Activated CD4-positive, alpha-beta T cell treated with anti-CD3 and anti-CD28 coated beads, Interleukin-2, amount 10 ng/mL, durations not matched to agents 7 days and 5 days (primary cell): ENCODE measurements at regions of chr11 and their contacts with region 1.

Region 1: DNA sequence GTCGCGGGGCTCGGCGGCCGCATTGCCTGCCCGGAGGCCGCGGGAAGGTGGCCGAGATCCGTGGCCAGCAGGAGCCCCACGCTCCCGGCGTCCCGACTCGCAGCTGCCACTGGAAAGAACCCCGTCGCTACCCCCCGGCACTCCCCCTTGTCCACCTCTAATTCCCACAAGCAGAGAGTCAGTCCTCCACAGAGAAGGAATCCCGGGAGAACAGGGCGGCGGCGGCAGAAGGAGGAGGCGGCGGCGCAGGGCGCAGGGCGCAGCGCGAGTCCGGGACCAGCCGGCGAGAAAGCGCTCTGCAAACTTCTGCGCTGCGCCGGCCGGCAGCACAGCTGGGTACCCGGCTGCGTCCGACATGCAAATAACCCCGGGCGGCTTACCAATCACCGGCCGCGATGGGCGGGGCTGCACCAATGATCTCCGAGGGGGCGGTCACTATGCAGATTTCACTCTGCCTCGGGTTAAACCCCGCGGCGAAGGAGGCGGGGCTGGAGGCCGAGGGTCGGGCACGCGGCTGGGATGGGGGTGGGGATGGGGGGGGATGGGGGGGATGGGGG is at the start of gene ABTB2:
- DNase-seq: peak; percentile 98
- H3K4me3 Mint-ChIP-seq: peak within 1 kb of the TSS; percentile 80
- H3K27ac Mint-ChIP-seq: peak within 1 kb of the TSS; percentile 82
- H3K4me1 Mint-ChIP-seq: peaks cover 18% of the 10 kb centered on the region
- H3K27me3 Mint-ChIP-seq: peaks cover 49% of the 10 kb centered on the region
- total RNA-seq, gene ABTB2: 0.55 to 0.65 TPM

Region 2: DNA sequence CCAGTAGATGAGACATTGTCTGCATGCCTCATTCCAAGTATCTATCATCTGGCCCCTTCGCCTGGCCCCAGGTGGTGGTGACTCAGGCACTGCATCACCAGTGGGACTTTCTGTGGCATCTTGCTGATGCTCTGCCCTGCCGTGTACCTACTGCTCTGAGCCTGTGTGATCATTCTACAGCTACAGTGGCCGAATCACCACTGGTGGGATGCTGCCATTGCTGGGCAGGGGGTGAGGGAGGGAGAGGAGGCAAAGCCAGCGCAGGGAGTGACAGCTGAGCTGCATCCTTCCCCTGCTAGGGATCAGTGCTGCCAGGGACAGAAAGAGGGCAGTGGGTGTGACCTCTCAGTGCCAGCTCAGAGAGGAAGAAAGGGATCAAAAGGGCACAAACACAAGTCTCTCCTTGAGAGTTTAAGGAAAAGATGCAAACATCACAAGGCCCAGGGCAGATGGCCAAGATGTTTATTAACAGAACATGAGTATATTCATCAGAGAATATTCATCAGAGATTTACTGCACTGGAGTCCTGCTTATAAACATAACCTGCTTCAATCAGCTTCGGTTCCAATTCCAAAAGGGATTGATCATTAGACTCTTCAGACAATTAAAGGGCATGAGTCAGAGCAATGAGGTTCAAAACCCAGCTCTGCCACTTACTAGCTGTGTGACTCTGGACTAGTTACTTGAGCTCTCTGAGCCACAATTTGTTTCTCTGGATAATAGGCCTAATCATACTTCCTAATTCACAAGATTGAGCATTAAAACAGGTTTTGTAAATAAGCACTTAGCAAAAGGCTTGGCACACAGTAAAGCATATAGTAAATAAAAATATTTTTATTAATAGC is 142.6 kb before region 1 on chr11:
- CTCF ChIA-PET with region 1: no interaction called
- POLR2A ChIA-PET with region 1: no interaction called
- DNase-seq: no peak
- H3K4me3 Mint-ChIP-seq: no peak overlapping the region
- H3K27ac Mint-ChIP-seq: no peak overlapping the region
- H3K4me1 Mint-ChIP-seq: peaks cover 7% of the 10 kb centered on the region
- H3K27me3 Mint-ChIP-seq: peaks cover 8% of the 10 kb centered on the region

Region 3: DNA sequence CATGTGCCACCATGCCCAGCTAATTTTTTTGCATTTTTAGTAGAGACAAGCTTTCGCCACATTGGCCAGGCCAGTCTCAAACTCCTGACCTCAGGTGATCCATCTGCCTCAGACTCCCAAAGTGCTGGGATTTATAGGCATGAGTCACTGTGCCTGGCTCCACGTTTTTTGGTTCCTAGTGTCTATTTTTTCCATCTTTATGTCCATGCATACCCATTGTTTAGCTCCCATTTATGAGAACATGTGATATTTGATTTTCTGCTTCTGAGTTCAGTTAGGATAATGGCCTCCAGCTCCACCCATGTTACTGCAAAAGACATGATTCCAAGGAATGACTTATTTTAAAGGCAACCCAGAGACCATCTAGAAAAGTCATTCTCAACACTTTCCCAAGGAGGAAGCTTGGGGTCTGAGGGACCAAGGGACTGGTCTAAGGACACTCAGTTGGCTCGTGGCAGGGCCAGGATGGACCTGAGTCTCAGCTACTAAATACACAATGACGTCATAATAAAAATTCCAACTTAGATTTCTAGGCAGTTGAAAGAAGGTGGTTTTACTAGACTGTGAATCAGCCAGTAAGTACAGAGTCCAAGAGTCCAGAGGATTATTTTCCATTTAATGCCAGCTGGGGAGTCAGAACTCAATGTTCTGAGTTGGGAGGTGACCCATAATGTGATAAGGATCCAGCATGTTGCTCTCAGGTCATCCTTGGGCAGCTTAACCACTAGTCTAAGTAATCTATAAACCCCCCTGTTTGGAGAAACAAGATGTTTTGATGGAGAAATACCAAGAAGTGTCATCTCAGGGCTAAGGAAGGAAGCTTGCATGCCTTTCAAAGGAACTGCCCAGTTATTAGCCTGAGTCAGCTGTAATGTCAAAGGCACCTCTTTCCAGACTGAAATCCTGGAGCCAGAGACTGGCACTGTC is 39.4 kb before region 1 on chr11:
- CTCF ChIA-PET with region 1: no interaction called
- POLR2A ChIA-PET with region 1: no interaction called
- DNase-seq: no peak
- H3K4me3 Mint-ChIP-seq: no peak overlapping the region
- H3K27ac Mint-ChIP-seq: no peak overlapping the region
- H3K4me1 Mint-ChIP-seq: peaks cover 3% of the 10 kb centered on the region
- H3K27me3 Mint-ChIP-seq: peaks cover 9% of the 10 kb centered on the region

Region 4: GRCh38 chr11:34344768-34345539 is 12.8 kb before region 1 on chr11:
- CTCF ChIA-PET with region 1: interaction called, 13 read pairs
- POLR2A ChIA-PET with region 1: no interaction called
- DNase-seq: no peak
- H3K4me3 Mint-ChIP-seq: no peak overlapping the region
- H3K27ac Mint-ChIP-seq: no peak overlapping the region
- H3K4me1 Mint-ChIP-seq: no peaks in the 10 kb centered on the region
- H3K27me3 Mint-ChIP-seq: peaks cover 4% of the 10 kb centered on the region

Region 5: DNA sequence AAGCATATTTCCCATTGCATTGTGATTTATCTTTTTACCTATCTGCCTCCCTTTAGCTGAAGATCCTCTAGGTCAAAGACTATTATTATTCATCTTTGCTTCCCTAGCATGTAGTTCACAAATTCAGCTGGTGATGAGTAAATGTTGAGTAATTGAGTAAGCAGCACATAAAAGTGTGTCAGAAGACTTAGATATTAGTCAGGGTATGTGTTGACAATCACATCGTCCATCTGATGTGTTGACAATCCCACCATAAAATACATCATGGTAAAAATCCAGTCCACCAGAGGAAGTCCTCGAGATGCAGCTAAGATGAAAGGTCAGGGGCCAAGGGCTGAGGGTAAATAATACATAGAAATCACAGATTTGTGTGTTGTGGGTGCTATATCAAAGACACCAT is 22.9 kb after region 1 on chr11:
- CTCF ChIA-PET with region 1: no interaction called
- POLR2A ChIA-PET with region 1: no interaction called
- DNase-seq: no peak
- H3K4me3 Mint-ChIP-seq: no peak overlapping the region
- H3K27ac Mint-ChIP-seq: no peak overlapping the region
- H3K4me1 Mint-ChIP-seq: no peaks in the 10 kb centered on the region
- H3K27me3 Mint-ChIP-seq: peaks cover 5% of the 10 kb centered on the region

Region 6: GRCh38 chr11:34480314-34480713 is 122.5 kb after region 1 on chr11:
- CTCF ChIA-PET with region 1: no interaction called
- POLR2A ChIA-PET with region 1: no interaction called
- DNase-seq: no peak
- H3K4me3 Mint-ChIP-seq: no peak overlapping the region
- H3K27ac Mint-ChIP-seq: no peak overlapping the region
- H3K4me1 Mint-ChIP-seq: no peaks in the 10 kb centered on the region
- H3K27me3 Mint-ChIP-seq: peaks cover 16% of the 10 kb centered on the region